Caco-2 (cell line): ENCODE measurements at regions of chr16 and their contacts with region 1.

Region 1: DNA sequence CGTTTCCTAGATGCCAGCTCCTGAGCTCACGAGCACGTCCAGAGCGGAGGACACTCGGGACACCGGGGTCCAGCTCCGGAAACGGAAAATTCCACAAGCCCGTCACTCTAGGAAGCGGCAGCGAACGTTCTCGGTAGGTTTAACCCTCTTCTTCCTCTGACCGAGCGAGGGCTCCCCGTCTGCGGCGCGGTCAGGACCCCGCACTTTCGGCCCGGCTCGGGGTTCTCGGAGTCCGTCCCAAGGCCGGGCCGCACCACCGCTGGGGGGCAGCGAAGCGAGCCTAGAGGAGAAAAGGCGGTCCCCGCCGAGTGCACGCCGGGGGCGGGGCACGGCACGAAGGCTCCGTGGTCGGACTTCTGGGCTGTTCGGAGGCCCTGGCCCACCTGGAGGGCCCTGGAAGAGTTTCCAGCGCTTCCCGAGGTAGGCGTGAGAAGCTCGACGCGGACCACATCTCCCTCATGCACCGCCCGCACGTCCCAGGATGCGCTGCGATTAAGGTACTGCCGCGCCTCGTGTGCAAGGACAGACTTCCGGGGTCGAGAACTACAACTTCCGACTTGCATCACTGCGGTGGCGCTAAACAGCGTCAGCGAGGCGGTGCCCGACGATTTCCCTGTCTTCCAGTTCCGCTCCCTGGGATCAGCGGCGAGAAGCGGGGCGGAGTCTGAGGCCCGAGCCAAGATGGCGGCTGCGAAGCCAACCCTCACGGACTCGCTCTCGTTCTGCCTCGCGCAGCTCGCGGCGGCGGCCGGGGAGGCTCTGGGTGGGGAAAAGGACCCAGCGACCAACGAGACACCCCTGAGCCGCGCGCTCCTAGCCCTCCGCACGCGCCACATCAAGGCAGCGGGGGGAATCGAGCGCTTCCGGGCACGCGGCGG is at the start of gene ARMC5:
- DNase-seq: peak; percentile 95 to 97
- H3K4me3 ChIP-seq: peak within 1 kb of the TSS; percentile 78
- H3K4me3 Mint-ChIP-seq: peak within 1 kb of the TSS; percentile 79
- H3K27ac Mint-ChIP-seq: peak within 1 kb of the TSS; percentile 85
- H3K4me1 ChIP-seq: peaks cover 13% of the 10 kb centered on the region; the same call in 1 of the 2 replicates
- H3K4me1 Mint-ChIP-seq: peaks cover 6% of the 10 kb centered on the region
- H3K27me3 ChIP-seq: no peaks in the 10 kb centered on the region
- H3K27me3 Mint-ChIP-seq: no peaks in the 10 kb centered on the region
- CTCF ChIP-seq: peak; percentile 63 to 79
- total RNA-seq, gene ARMC5: 9.7 and 10.2 TPM in 2 replicates

Region 2: DNA sequence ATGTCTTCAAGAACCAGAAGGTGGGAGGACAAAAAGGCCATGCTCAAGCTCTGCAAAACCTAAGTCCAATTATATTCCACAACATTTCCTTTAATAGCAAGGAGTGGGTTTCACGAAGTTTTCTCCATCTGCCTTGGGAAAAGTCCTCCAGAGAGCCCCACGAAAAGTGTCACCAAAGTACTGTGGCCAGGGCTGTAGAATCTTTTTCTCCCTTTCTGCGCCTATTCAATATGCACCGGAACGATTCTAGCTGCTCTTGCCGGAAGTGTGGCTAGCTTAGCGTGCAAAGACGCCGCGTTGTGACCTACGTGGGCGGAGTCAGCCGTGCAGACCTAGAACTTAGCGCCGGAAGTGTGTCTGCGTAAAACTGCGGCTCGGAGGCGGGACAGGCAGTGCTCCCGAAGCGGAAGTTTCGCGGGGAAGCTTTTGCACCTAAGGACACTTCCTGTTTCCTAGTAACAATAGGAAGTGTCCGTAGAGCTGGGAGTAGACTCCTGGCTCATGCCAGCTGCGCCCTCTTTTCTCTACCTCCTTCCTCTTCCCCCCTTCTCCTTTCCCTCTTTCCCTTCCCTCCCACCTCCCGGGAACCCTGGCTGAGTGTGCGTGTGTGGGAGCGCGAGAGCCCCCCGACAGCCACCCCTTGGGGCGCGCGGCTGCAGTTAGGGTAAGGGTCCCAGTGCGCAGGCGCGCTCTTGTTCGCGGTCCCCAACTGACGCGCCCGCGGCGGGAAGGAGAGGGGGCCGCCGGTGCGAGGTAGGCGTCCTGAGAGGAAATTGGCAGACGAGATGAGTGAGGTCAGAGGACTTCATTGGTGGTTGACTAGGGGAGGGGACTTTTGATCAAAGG is 384.9 kb before region 1 on chr16 and contains the starts of genes ZNF646 and ZNF668:
- CTCF ChIA-PET with region 1: interaction called, 3 read pairs
- POLR2A ChIA-PET with region 1: no interaction called
- intact Hi-C with region 1: loop called (anchors 2 kb)
- DNase-seq: peak; percentile 94 to 98
- H3K4me3 ChIP-seq: peak within 1 kb of the TSS; percentile 79
- H3K4me3 Mint-ChIP-seq: peak within 1 kb of the TSS; percentile 84
- H3K27ac Mint-ChIP-seq: peak within 1 kb of the TSS; percentile 58
- H3K4me1 ChIP-seq: peaks cover 9% of the 10 kb centered on the region; the same call in 1 of the 2 replicates
- H3K4me1 Mint-ChIP-seq: peaks cover 7% of the 10 kb centered on the region
- H3K27me3 ChIP-seq: no peaks in the 10 kb centered on the region
- H3K27me3 Mint-ChIP-seq: no peaks in the 10 kb centered on the region
- CTCF ChIP-seq: no peak
- total RNA-seq, gene ZNF646: 17.2 and 18.1 TPM in 2 replicates
- total RNA-seq, gene ZNF668: 8.7 and 10.8 TPM in 2 replicates

Region 3: GRCh38 chr16:31179747-31180459 is 279.2 kb before region 1 on chr16 and contains the start of gene FUS:
- CTCF ChIA-PET with region 1: no interaction called
- POLR2A ChIA-PET with region 1: interaction called, 10 read pairs
- intact Hi-C with region 1: no loop called
- DNase-seq: peak; percentile 88 to 90
- H3K4me3 ChIP-seq: peak within 1 kb of the TSS; percentile 95
- H3K4me3 Mint-ChIP-seq: peak within 1 kb of the TSS; percentile 97
- H3K27ac Mint-ChIP-seq: peak within 1 kb of the TSS; percentile 100
- H3K4me1 ChIP-seq: no peaks in the 10 kb centered on the region
- H3K4me1 Mint-ChIP-seq: peaks cover 4% of the 10 kb centered on the region
- H3K27me3 ChIP-seq: no peaks in the 10 kb centered on the region
- H3K27me3 Mint-ChIP-seq: no peaks in the 10 kb centered on the region
- CTCF ChIP-seq: no peak
- total RNA-seq, gene FUS: 489 and 490 TPM in 2 replicates

Region 4: DNA sequence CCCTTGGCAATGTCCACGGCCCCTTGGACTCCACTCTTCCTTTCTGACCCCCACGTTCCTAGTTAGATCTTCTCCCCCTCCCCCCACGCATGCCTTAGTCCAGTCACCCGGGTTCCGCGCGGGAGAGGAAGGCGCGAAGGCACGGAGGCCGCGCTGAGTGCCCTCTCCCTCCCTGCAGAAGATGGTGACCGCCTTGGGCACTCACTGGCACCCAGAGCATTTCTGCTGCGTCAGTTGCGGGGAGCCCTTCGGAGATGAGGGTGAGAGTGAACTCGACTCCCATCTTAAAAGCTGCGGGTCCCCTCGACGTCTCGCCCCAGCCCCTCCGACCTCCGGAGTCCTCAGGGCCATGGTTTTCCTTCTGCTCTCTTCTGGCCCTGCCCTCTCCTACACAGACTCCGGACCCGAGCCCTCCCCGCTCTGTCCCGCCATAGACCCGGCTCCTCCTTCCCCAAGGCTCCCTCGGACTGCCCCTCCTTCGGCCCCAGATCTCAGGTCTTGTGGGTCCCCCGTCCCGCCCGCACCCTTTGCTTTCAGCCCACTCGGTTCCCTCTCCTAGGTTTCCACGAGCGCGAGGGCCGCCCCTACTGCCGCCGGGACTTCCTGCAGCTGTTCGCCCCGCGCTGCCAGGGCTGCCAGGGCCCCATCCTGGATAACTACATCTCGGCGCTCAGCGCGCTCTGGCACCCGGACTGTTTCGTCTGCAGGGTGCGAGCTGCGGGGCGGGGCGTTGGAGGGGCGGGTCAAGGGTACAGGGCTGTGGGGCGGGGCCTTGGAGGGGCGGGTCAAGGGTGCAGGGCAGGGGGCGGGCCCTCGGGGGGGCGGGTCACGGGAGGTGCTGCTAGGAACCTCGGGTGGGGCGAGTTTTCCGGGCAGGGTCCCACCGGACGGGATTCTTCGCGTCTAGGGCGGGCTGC is 17.5 kb after region 1 on chr16:
- CTCF ChIA-PET with region 1: interaction called, 33 read pairs
- POLR2A ChIA-PET with region 1: interaction called, 30 read pairs
- intact Hi-C with region 1: loop called (anchors 1 kb)
- DNase-seq: peak; percentile 79 to 87
- H3K4me3 ChIP-seq: peak overlapping the region; percentile 81
- H3K4me3 Mint-ChIP-seq: peak overlapping the region; percentile 86
- H3K27ac Mint-ChIP-seq: peak overlapping the region; percentile 86
- H3K4me1 ChIP-seq: peaks cover 3% of the 10 kb centered on the region
- H3K4me1 Mint-ChIP-seq: peaks cover 18% of the 10 kb centered on the region
- H3K27me3 ChIP-seq: no peaks in the 10 kb centered on the region
- H3K27me3 Mint-ChIP-seq: no peaks in the 10 kb centered on the region
- CTCF ChIP-seq: no peak

Region 5: DNA sequence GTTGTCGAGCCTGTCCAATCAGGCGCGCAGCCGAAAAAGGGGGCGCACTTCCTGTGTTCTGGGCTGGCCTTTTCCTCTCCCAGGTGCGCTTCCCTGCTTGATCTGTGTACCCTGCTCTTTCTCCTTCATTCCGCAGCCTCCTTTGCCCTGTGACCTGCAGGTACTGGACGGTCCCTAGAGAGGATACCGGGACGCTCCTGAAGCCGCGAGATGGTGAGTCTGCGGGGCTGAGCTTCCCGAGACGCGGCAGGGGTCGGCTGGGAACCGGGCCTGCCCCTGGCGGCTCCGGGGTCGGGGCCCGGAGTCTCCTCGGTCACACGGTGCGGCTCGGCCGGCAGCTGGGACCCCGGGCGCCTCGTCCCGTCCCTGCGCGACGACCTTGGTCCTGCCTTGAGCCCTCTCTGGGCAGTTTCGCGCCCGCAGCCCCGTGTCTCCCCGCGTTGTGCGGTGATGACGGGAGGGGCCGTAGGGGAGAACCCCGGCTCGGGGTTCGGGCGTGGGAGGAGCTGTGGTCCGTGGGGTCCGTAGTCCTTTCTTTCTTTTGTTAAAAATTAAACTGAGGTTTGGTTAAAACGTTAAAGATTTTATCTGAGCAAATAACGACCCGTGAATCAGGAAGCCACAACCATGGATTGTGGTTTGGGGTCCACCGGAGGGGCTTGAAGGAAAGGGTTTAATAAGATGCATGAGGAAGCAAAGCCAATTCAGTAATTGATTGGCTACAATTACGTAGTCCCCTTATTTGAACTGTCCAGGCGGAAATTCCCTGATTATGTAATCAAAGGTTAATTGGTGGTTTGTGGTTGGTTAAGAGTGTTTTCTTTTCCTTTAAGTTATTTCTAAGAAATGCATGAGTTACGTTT is 241.7 kb after region 1 on chr16:
- CTCF ChIA-PET with region 1: no interaction called
- POLR2A ChIA-PET with region 1: no interaction called
- intact Hi-C with region 1: loop called (anchors 1 kb)
- DNase-seq: peak; percentile 93 to 94
- H3K4me3 ChIP-seq: peak overlapping the region; percentile 67
- H3K4me3 Mint-ChIP-seq: peak overlapping the region; percentile 82
- H3K27ac Mint-ChIP-seq: peak overlapping the region; percentile 77
- H3K4me1 ChIP-seq: peaks cover 6% of the 10 kb centered on the region; the same call in 1 of the 2 replicates
- H3K4me1 Mint-ChIP-seq: peaks cover 8% of the 10 kb centered on the region
- H3K27me3 ChIP-seq: no peaks in the 10 kb centered on the region
- H3K27me3 Mint-ChIP-seq: no peaks in the 10 kb centered on the region
- CTCF ChIP-seq: no peak

Region 6: DNA sequence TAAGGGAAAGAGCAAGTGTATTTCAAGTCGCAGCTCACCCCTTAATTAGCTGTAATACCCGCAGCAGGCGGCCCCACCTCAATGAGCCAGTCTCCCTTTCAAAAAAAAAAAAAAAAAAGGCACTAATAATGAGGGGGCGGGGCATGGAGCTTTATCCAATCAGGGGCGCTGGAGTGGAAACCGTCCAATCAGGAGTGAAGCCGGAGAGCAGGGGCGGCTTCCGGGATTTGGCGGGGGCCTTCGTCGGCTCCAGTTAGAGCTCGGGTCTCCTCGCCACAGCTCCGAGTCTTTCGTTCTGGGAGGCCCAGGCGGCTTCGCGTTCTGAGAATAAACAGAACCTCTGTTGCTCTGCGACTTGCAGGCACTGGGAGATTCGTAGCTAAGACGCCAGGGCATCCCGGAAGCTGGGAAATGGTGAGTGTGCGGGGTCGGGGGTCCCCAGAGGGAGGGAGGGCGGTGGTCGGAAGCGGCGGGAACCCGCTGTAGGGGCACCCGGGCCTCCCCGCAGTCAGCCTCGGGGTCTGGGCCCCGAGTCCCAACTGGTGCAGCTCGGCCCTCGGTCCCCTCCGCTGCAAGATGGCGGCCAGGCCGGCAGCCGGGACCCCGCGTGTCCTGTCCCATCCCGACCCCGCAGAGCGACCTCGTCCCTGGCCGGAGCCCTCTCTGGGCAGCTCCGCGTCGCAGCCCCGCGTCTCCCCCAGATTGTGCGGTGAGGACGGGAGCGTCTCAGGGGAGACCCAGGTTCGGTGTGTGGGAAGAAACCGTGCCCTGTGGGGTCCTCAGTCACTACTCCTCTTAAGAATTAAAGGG is 414.7 kb after region 1 on chr16 and contains the start of gene ZNF267:
- CTCF ChIA-PET with region 1: no interaction called
- POLR2A ChIA-PET with region 1: interaction called, 7 read pairs
- intact Hi-C with region 1: loop called (anchors 10 kb)
- DNase-seq: peak; percentile 93
- H3K4me3 ChIP-seq: peak within 1 kb of the TSS; percentile 93
- H3K4me3 Mint-ChIP-seq: peak within 1 kb of the TSS; percentile 91
- H3K27ac Mint-ChIP-seq: peak within 1 kb of the TSS; percentile 96
- H3K4me1 ChIP-seq: peaks cover 24% of the 10 kb centered on the region
- H3K4me1 Mint-ChIP-seq: peaks cover 12% of the 10 kb centered on the region
- H3K27me3 ChIP-seq: no peaks in the 10 kb centered on the region
- H3K27me3 Mint-ChIP-seq: no peaks in the 10 kb centered on the region
- CTCF ChIP-seq: no peak
- total RNA-seq, gene ZNF267: 25.5 and 25.8 TPM in 2 replicates